ENCODE measurements at regions of chr9 and their contacts with region 1.

Region 1: DNA sequence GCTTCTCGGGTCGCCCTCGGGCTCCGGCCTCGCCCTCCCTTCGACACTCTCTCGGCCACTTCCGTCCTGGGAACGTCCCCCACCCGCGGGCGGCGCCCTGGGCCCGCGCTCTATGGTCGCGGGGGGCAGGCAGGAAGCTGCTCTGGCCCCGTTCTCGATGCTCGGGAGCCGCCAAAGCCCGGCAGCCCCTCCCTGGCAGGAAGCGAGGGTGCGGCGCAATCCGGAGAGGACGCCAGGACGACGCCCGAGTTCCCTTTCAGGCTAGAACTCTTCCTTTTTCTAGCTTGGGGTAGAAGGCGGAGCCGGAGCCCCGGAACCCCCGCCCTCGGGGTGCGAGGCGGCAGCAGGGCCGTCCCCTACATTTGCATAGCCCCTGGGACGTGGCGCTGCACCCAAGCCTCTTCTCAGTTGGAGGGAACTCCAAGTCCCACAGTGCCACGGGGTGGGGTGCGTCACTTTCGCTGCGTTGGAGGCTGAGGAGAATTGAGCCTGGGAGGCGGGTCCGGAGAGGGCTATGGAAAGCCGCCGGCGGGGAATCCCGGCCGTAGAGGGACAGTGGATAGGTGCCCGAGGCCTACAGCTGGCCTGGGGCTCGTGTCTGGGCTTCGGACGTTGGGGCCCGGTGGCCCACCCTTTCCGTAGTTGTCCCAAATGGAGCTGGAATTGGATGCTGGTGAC is at the starts of genes CREB3 and TLN1:
- DNase-seq: peak; percentile 97
- ATAC-seq: peak; percentile 81 to 85
- H3K4me3 ChIP-seq: peak within 1 kb of the TSS; percentile 68 to 94 (median 87)
- H3K27ac ChIP-seq: peak within 1 kb of the TSS; percentile 88 to 98 (median 92)
- H3K4me1 ChIP-seq: peaks cover 51 to 55% of the 10 kb centered on the region in 2 donors
- H3K27me3 ChIP-seq: no peaks in the 10 kb centered on the region
- CTCF ChIP-seq: no peak
- POLR2A ChIP-seq: peak; percentile 75 to 92
- total RNA-seq, gene CREB3: 17.8 to 39.6 (median 26.2) TPM
- total RNA-seq, gene TLN1: 106 to 256 (median 186) TPM

Region 2: GRCh38 chr9:35603987-35604577 is 128.2 kb before region 1 on chr9:
- in situ Hi-C with region 1: no loop called
- intact Hi-C with region 1: loop called (anchors 2 kb)
- DNase-seq: peak; percentile 100
- ATAC-seq: peak; percentile 82 to 83
- H3K4me3 ChIP-seq: peak overlapping the region; percentile 64 to 80 (median 74)
- H3K27ac ChIP-seq: peak overlapping the region; percentile 93 to 99 (median 99)
- H3K4me1 ChIP-seq: peaks cover 33 to 41% of the 10 kb centered on the region in 2 donors
- H3K27me3 ChIP-seq: no peaks in the 10 kb centered on the region
- CTCF ChIP-seq: peak; percentile 96 to 100 (median 98)
- POLR2A ChIP-seq: peak; percentile 85 to 91

Region 3: DNA sequence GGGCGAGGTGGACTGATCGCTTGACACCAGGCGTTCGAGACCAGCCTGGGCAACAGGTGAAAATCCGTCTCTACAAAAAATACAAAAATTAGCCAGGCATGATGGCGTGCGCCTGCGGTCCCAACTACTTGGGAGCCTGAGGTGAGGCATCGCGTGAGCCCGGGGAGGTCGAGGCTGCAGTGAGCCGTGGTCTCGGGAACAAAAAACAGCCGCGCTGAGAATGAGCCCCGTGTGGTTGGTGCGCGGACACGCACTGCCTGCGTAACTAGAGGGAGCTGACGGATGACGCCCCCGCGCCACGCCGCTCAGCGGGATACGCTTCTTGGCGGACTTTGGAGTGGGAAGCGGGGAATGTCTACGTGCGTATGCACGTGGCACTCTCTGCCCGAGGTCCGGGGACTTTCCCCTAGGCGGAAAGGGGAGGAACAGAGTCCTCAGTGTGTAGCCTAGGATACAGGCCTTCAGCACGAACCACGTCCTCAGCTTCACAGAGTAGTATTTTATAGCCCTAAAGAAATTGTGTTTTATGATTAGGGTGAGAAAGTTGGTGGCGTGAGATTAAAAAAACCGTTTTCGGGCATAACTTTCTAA is 74.6 kb before region 1 on chr9 and contains the start of gene RMRP:
- in situ Hi-C with region 1: loop called in 1 of 4 experiments (anchors 10 kb)
- intact Hi-C with region 1: loop called (anchors 1 kb)
- DNase-seq: peak; percentile 97 to 98
- ATAC-seq: peak; percentile 91 to 96
- H3K4me3 ChIP-seq: peak within 1 kb of the TSS; percentile 79 to 85 (median 82)
- H3K27ac ChIP-seq: peak within 1 kb of the TSS; percentile 92 to 97 (median 96)
- H3K4me1 ChIP-seq: peaks cover 28 to 29% of the 10 kb centered on the region in 2 donors
- H3K27me3 ChIP-seq: no peaks in the 10 kb centered on the region
- CTCF ChIP-seq: peak; percentile 44 to 56 (median 52)
- POLR2A ChIP-seq: peak; percentile 56 to 61
- total RNA-seq, gene RMRP: 115 to 715 (median 367) TPM

Region 4: GRCh38 chr9:35690431-35691333 is 41.6 kb before region 1 on chr9:
- in situ Hi-C with region 1: no loop called
- intact Hi-C with region 1: loop called (anchors 2 kb)
- DNase-seq: peak; percentile 56 to 75
- ATAC-seq: peak; percentile 21 to 32
- H3K4me3 ChIP-seq: peak overlapping the region; percentile 77 to 96 (median 87)
- H3K27ac ChIP-seq: peak overlapping the region; percentile 97 to 99 (median 98)
- H3K4me1 ChIP-seq: peaks cover 35 to 37% of the 10 kb centered on the region in 2 donors
- H3K27me3 ChIP-seq: no peaks in the 10 kb centered on the region
- CTCF ChIP-seq: no peak
- POLR2A ChIP-seq: peak; percentile 21 to 25

Region 5: DNA sequence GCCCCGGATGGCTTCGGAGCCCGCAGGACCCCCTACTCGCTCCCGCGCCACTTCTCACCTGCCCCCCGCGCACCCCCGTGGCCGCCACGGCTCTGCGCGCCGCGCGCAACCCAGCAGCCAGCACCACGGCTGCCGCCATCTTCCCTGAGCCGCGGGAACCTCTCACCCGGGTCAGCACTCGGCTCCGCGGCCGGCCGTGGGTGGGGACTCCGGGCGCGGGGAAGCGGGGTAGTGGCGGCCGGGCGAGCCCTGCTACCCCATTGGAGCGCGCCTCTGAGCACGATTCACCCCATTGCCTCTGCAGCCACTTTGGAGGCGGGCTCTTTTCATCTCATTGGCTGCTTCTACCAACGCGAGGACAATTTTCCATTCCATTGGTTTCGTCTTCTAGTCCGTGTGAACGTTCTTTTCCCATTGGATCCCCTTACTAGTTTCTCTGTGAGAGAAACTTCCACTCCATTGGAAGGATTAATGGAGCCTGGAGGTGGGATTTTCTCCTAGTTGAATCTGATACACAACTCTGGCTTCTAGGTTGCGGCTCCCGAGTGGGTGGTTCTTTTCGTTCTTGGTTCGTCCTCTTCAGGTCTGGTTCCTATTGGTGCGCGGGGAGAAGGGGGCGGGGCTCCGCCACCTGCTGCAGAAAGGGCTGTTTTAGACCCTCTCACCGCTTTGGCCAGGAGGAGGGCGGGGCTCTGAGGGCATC is 82.7 kb after region 1 on chr9 and contains the start of gene HINT2:
- in situ Hi-C with region 1: no loop called
- intact Hi-C with region 1: loop called (anchors 1 kb)
- DNase-seq: peak; percentile 95 to 98
- ATAC-seq: peak; percentile 87 to 95
- H3K4me3 ChIP-seq: peak within 1 kb of the TSS; percentile 78 to 93 (median 84)
- H3K27ac ChIP-seq: peak within 1 kb of the TSS; percentile 95 to 98 (median 96)
- H3K4me1 ChIP-seq: peaks cover 30 to 34% of the 10 kb centered on the region in 2 donors
- H3K27me3 ChIP-seq: no peaks in the 10 kb centered on the region
- CTCF ChIP-seq: peak in 1 of 5 experiments; percentile 3
- POLR2A ChIP-seq: peak; percentile 92 to 94
- total RNA-seq, gene HINT2: 4.5 to 26.7 (median 22.0) TPM

Measured in gastrocnemius medialis (tissue), 4 donors.